ENCODE measurements at regions of chr4 and their contacts with region 1.

Region 1: DNA sequence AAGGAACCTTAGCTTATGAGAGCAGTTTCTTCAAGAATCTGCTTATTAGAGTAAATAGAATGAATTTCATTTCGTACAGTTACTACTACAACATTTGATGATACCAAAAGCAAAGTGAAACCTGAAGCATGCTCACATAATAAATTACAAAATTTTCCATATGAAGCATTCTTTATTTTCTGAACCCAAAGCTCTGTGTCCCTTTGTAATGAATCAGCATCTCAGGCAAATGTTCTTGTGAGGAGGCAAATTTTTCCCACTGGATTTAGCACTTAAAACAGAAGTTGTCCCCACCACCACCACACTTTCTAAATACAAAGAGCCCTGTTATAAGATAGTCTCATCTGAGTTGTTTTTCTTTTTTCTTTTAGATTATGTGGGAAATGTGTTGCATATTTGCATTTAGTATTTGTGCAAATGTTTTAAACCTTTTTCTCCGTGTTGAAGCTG is 70.7 kb upstream of the NFKB1 start:
- DNase-seq: no peak

Region 2: DNA sequence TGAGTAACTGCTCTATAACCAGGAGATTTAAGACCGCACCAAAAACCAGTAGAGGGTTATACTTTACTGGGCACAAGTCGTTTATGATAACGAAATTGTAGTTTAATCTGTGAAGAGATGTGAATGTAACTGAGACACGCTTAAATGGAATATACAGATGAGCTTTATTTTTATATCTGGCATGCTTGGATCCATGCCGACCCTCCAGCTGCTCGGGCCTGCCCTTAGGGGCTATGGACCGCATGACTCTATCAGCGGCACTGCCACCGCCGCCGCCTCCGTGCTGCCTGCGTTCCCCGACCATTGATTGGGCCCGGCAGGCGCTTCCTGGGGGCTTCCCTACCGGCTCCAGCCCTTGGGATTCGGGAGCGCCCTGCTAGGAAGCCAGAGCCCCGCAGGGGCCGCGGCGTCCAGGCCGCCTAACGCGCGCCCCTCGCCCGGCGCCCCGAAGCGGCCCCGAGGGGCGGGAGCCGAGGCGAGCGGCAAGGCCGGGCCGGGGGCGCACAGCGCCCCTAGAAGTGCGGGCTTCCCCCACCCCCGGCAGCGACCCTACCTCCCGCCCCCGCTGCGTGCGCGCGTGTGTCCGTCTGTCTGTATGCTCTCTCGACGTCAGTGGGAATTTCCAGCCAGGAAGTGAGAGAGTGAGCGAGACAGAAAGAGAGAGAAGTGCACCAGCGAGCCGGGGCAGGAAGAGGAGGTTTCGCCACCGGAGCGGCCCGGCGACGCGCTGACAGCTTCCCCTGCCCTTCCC is 70.4 kb after region 1 on chr4 and contains the start of gene NFKB1:
- intact Hi-C with region 1: loop called (anchors 5 kb)
- DNase-seq: peak in 9 of 10 donors; percentile 23 to 88 (median 58)

Region 3: GRCh38 chr4:103008875-103009729 is 578.6 kb after region 1 on chr4:
- intact Hi-C with region 1: loop called (anchors 5 kb)
- DNase-seq: no peak

Region 4: GRCh38 chr4:103091601-103092223 is 661.2 kb after region 1 on chr4:
- intact Hi-C with region 1: loop called (anchors 5 kb)
- DNase-seq: peak in 3 of 10 donors; percentile 12 to 54 (median 20)

Measured in posterior cingulate gyrus (tissue), 11 donors.